Gastrocnemius medialis (tissue), 4 donors: ENCODE measurements at regions of chr15 and their contacts with region 1.

Region 1: DNA sequence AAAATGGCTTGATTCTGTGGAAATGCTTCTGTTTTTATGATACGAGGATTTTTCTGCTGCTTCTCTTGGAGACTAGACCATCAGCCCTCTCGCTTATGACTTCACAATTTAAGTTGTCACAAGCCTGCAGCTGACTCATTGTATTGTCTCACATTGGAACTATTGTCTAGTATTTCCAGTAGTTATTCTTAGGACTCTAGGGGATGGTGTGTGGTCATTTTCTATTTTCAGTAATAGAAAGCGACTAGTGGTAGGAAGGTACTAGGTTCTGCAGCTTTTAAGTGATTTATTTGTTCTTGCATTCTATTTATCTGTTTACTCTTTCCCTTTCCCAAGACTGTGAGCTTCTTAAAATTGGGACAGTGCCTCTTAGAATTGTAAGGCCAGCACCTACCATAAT is 66.3 kb upstream of the CRTC3 start:
- DNase-seq: peak; percentile 44 to 57
- ATAC-seq: peak; percentile 91 to 92
- H3K4me3 ChIP-seq: peak overlapping the region in 1 of 4 donors; percentile 3
- H3K27ac ChIP-seq: peak overlapping the region; percentile 84 to 89 (median 86)
- H3K4me1 ChIP-seq: peaks cover 65 to 70% of the 10 kb centered on the region in 2 donors
- H3K27me3 ChIP-seq: no peaks in the 10 kb centered on the region
- CTCF ChIP-seq: peak; percentile 19 to 54 (median 43)
- POLR2A ChIP-seq: peak in 1 of 2 donors; percentile 54

Region 2: DNA sequence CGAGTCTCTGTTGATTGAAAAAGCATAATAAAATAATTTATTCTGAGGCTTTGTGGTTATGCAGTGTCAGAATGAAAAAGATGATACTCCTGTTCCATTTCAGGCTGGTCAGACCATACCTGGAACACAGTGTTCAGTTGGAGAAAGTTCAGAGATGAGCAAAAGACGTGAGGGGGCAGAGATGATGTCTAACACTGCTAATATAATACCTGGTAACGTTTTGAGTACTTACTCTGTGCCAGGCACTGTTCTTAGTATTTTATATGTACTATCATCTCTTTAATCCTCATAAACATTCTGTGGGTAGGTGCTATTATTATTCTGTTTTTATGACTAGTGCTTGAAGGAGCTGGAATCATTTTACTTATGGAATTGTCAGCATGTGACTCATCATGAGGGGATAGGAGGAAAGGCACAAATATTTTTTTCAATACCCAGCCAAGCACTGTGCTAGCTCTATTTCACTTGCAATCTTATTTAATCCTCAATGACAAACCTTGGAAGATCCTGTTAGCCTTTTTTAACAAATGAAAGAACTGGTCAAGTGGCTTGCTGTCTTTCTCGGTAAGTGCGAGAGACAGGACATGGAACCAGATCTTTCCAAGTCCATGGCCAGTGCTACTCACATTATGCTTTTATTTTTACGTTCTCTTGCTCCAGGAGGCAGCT is 43.5 kb before region 1 on chr15:
- in situ Hi-C with region 1: no loop called
- intact Hi-C with region 1: loop called (anchors 2 kb)
- DNase-seq: peak; percentile 62 to 64
- ATAC-seq: peak; percentile 84 to 92
- H3K4me3 ChIP-seq: peak overlapping the region in 2 of 4 donors; percentile 9 to 16
- H3K27ac ChIP-seq: peak overlapping the region; percentile 85 to 96 (median 92)
- H3K4me1 ChIP-seq: peaks cover 75% of the 10 kb centered on the region in 2 donors
- H3K27me3 ChIP-seq: no peaks in the 10 kb centered on the region
- CTCF ChIP-seq: no peak
- POLR2A ChIP-seq: peak; percentile 9 to 68